Activated CD4-positive, alpha-beta memory T cell treated with anti-CD3 and anti-CD28 coated beads, Interleukin-2, amount 10 ng/mL, durations not matched to agents 7 days and 5 days (primary cell): ENCODE measurements at regions of chr1 and their contacts with region 1.

Region 1: DNA sequence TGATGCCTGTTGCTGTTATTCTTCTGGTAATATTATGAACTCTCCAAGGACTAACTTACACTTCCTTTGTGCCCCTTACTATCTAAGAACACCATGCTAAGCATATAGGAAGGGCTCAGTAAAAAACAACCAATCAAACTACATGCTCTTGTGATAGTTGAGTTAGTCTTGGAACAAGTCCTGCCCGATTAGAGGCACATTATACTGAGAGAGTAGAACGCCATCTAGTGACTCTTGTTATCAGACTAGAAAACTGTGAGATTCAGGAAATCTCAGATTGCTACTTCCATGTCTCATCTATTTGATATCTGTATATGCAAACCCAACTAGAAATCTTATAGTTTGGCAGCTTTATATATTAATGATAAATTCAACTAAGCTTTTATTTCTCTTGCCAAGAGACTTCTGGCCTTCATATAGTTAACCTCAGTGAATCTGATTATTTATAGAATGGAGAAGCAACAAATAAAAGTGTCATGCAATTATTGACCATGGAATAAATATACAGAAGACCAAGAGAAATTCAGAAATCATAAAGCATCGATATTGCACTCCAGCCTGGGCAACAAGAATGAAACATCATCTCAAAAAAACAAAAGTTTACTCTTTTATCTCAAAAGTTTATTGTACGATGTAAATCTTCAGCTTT is 7.8 kb upstream of the SRRM1 start:
- DNase-seq: no peak
- H3K4me3 Mint-ChIP-seq: no peak overlapping the region
- H3K27ac Mint-ChIP-seq: no peak overlapping the region
- H3K4me1 Mint-ChIP-seq: peaks cover 9% of the 10 kb centered on the region
- H3K27me3 Mint-ChIP-seq: peaks cover 10% of the 10 kb centered on the region

Region 2: GRCh38 chr1:24541711-24542346 is 93.5 kb before region 1 on chr1:
- CTCF ChIA-PET with region 1: interaction called, 11 read pairs
- POLR2A ChIA-PET with region 1: no interaction called
- DNase-seq: peak; percentile 47
- H3K4me3 Mint-ChIP-seq: no peak overlapping the region
- H3K27ac Mint-ChIP-seq: peak overlapping the region; percentile 81
- H3K4me1 Mint-ChIP-seq: peaks cover 66% of the 10 kb centered on the region
- H3K27me3 Mint-ChIP-seq: no peaks in the 10 kb centered on the region

Region 3: GRCh38 chr1:24609949-24610382 is 25.4 kb before region 1 on chr1:
- CTCF ChIA-PET with region 1: no interaction called
- POLR2A ChIA-PET with region 1: no interaction called
- DNase-seq: no peak
- H3K4me3 Mint-ChIP-seq: no peak overlapping the region
- H3K27ac Mint-ChIP-seq: no peak overlapping the region
- H3K4me1 Mint-ChIP-seq: no peaks in the 10 kb centered on the region
- H3K27me3 Mint-ChIP-seq: peaks cover 12% of the 10 kb centered on the region